Psoas muscle (tissue), 8 donors: ENCODE measurements at regions of chr20 and their contacts with region 1.

Region 1: DNA sequence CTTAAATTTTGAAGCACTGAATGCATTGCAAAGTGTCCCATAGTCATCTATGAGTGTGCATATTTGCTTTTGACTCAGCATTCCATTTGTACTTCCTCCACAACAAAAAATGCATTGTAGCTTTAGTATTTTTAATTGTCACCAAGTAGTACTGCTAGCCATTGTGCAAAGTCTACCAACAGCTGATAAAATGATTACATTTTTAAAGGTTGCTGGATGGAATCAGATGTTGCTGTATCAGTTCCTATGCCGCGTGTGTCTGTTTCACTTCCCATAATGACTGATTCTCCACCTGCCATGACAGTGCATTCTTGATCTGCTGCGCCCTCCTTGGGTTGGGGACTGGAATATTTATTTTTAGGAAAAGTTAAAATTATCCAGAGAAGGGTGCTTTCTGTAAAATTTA is 41.2 kb downstream of the SLX4IP start:
- DNase-seq: no peak
- ATAC-seq: no peak
- H3K4me3 ChIP-seq: no peak overlapping the region
- H3K27ac ChIP-seq: no peak overlapping the region
- H3K4me1 ChIP-seq: peaks cover 3% of the 10 kb centered on the region
- H3K27me3 ChIP-seq: no peaks in the 10 kb centered on the region
- CTCF ChIP-seq: no peak

Region 2: DNA sequence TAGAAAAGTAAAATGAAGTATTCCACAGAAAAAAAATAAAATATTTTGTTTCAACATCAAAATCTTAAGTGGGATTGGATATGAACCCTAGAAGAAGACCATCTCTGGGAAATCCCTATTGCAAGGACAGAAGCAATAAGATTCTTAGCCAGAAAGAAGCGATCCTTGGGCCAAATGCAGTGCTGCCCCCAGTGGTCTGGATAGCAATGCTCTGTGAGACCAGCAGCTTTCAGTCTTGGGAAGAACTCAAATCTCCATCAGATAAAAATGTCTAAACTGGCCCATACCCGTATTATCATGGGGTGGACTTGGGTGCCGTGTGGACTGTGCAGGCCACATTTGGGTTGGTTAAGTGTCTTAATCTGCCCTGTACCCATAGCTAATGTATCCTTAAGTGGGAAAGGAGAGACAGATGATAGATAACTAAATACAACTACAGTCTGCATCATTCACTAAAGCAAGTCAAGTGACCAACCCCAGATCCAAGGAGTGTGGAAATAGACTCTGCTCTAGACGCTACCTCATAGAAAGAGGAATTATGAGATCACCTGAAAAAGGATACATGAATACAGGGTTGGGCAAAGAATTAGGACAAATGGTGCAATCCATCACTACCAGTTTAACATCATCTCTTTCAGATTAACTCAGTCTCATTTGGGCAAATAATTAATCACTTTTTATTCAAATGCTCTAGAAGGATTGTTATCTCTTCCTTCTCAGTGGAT is 296.6 kb before region 1 on chr20:
- intact Hi-C with region 1: no loop called
- DNase-seq: no peak
- ATAC-seq: no peak
- H3K4me3 ChIP-seq: no peak overlapping the region
- H3K27ac ChIP-seq: no peak overlapping the region
- H3K4me1 ChIP-seq: no peaks in the 10 kb centered on the region
- H3K27me3 ChIP-seq: no peaks in the 10 kb centered on the region
- CTCF ChIP-seq: peak; percentile 5

Region 3: DNA sequence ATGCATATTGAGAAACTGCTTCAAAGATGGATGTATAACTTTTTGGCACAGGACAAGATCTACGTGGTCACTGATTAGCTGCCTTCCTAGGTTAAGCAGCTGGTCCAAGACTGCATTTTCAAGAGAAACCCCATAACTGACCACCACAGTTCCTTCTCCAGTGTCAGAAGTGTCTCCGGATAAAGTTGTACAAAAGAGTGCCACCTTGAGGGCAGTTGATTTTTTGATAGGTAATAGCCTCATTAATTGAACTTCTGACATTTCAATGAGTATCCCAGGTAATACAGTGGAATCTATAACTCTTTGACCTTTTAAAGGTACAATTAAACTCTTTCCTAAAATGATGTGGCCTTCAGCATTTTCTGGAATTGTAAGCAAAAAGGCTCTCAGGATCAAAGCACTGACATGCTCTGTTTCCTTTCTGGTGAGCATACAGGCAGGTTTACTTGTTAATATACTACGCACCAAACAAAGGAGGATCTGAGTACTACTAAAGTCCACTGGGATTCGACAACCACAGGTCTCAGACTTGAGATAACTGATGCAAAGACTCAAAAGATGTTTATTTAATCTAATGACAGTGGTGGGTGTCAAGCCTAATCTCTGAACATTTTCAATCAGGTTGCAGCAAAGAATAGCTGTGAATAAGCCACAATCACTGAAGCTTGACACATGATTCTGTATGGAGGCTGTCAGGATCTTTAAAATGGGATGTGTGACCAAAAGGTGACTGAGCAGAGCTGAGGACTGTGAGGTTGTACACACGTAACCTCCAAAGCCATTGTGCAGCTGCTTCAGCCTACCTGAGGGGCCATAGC is 63.5 kb before region 1 on chr20:
- intact Hi-C with region 1: loop called in 1 of 2 experiments (anchors 10 kb)
- DNase-seq: no peak
- ATAC-seq: no peak
- H3K4me3 ChIP-seq: no peak overlapping the region
- H3K27ac ChIP-seq: no peak overlapping the region
- H3K4me1 ChIP-seq: peaks cover 4% of the 10 kb centered on the region
- H3K27me3 ChIP-seq: no peaks in the 10 kb centered on the region
- CTCF ChIP-seq: no peak

Region 4: GRCh38 chr20:10667077-10667401 is 190.7 kb after region 1 on chr20:
- intact Hi-C with region 1: loop called in 1 of 2 experiments (anchors 10 kb)
- DNase-seq: peak; percentile 59 to 71
- ATAC-seq: peak; percentile 41 to 57 (median 55)
- H3K4me3 ChIP-seq: peak overlapping the region; percentile 97
- H3K27ac ChIP-seq: peak overlapping the region; percentile 61
- H3K4me1 ChIP-seq: peaks cover 43% of the 10 kb centered on the region
- H3K27me3 ChIP-seq: no peaks in the 10 kb centered on the region
- CTCF ChIP-seq: no peak